ENCODE measurements at regions of chr3 and their contacts with region 1.

Region 1: DNA sequence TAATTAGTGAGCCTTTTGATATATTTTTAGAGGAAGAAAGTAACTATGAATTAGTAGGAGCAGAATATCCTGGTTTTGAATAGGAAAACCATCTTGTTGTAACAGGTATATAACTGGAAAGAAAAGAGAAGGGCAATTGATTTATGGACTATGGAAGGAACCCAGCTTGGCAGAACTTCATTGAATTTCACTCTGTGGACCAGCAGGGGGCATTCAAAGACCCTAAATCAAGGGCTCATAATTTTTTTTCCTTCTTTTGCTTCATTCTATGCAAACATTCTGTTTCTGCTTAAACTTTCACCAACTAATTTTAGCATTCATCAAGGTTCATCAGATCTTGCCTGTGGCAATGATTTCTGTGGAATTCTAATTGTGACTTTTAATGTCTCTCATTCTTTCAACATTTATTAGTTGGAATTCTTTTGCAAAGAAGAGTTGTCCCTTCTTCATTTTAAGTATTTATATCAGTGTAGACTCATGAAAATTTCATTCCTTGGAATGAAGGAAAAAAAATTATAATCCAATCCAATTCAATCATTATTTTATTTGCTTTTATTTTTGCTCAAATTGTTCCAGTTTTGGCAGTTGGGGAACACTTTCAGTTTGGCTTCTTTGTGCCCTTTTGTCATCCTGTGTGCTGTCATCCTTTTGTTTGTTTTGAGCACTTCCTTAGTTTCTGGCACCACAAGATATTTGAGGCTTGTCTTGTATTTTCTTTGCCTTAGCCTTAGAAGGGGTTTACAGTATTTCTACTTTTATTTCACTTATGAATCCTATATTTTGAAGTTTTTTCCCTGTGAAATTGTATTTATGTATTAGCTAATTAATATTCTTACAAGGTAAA is 30.4 kb downstream of the NXPE3 start:
- DNase-seq: peak in 1 of 2 experiments; percentile 42
- H3K4me3 ChIP-seq: no peak overlapping the region
- H3K4me3 Mint-ChIP-seq: no peak overlapping the region
- H3K27ac Mint-ChIP-seq: no peak overlapping the region
- H3K4me1 ChIP-seq: peaks cover 11% of the 10 kb centered on the region; the same call in 1 of the 2 replicates
- H3K4me1 Mint-ChIP-seq: no peaks in the 10 kb centered on the region
- H3K27me3 ChIP-seq: no peaks in the 10 kb centered on the region
- H3K27me3 Mint-ChIP-seq: no peaks in the 10 kb centered on the region
- CTCF ChIP-seq: peak; percentile 62 to 64

Region 2: DNA sequence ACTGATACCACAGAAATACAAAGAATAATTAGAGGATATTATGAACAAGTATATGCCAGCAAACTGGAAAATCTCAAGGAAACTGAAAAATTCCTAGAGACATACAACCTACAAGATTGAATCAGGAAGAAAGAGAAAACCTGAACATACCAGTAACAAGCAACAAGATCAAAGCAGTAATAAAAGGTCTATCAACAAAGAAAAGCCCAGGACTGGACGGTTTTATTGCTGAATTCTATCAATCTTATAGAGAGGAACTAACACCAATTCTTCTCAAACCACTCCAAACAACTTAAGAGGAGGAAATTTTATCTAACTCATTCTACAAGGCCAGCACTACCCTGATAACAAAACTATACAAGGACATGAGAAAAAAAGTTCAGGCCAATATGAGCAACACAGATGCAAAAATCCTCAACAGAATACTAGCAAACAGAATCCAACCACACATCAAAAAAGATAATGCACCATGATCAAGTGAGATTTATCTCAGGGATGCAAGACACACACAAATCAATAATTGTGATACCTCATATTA is 417.9 kb before region 1 on chr3:
- CTCF ChIA-PET with region 1: no interaction called
- POLR2A ChIA-PET with region 1: no interaction called
- intact Hi-C with region 1: no loop called
- DNase-seq: no peak
- H3K4me3 ChIP-seq: no peak overlapping the region
- H3K4me3 Mint-ChIP-seq: no peak overlapping the region
- H3K27ac Mint-ChIP-seq: no peak overlapping the region
- H3K4me1 ChIP-seq: no peaks in the 10 kb centered on the region
- H3K4me1 Mint-ChIP-seq: no peaks in the 10 kb centered on the region
- H3K27me3 ChIP-seq: no peaks in the 10 kb centered on the region
- H3K27me3 Mint-ChIP-seq: no peaks in the 10 kb centered on the region
- CTCF ChIP-seq: no peak

Region 3: DNA sequence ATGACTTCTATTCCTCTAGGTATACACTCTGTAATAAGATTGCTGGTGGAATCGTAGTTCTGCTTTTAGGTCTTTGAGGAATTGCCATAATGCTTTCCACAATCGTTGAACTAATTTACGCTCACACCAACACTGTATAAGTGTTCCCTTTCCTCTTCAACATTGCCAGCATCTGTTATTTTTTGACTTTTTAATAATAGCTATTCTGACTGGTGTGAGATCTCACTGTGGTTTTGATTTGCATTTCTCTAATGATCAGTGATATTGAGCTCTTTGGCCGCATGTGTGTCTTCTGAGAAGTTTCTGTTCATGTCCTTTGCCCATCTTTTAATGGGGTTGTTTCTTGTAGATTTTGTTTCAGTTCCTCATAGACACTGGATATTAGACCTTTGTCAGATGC is 17.6 kb before region 1 on chr3:
- CTCF ChIA-PET with region 1: no interaction called
- POLR2A ChIA-PET with region 1: no interaction called
- intact Hi-C with region 1: no loop called
- DNase-seq: no peak
- H3K4me3 ChIP-seq: no peak overlapping the region
- H3K4me3 Mint-ChIP-seq: no peak overlapping the region
- H3K27ac Mint-ChIP-seq: no peak overlapping the region
- H3K4me1 ChIP-seq: no peaks in the 10 kb centered on the region
- H3K4me1 Mint-ChIP-seq: no peaks in the 10 kb centered on the region
- H3K27me3 ChIP-seq: no peaks in the 10 kb centered on the region
- H3K27me3 Mint-ChIP-seq: no peaks in the 10 kb centered on the region
- CTCF ChIP-seq: no peak

Region 4: DNA sequence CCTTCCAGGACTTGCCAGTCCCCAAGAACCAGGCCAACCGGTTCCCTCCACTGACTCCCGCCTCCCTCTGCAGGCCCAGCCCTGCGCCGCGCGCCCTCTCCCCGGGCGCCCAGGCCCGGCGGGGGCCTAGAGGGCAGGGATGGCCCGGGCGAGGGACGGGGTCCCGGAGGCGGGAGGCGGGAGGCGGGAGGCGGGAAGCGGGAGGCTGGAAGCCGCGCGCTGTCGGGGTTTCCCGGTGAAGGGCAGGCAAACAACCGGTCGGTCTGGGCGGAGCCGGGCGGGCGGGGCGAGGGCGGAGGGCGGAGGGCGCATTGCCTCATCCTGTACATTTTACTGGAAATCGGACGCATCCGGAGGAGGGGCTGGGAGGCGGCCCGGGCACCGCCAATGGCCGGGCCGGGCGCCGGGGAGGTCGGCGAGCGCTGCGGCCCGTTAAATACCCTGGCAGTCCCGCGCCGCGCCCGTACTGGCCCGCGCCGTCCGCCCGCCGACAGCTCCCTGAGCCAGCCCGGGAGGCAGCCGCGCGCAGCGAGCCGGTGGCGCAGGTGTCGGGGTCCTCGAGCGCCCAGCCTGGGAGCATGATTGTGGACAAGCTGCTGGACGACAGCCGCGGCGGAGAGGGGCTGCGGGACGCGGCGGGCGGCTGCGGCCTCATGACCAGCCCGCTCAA is 39.8 kb after region 1 on chr3 and contains the start of gene NFKBIZ:
- CTCF ChIA-PET with region 1: no interaction called
- POLR2A ChIA-PET with region 1: no interaction called
- intact Hi-C with region 1: loop called (anchors 1 kb)
- DNase-seq: peak; percentile 95 to 96
- H3K4me3 ChIP-seq: peak within 1 kb of the TSS; percentile 96
- H3K4me3 Mint-ChIP-seq: peak within 1 kb of the TSS; percentile 65
- H3K27ac Mint-ChIP-seq: peak within 1 kb of the TSS; percentile 61
- H3K4me1 ChIP-seq: peaks cover 54% of the 10 kb centered on the region
- H3K4me1 Mint-ChIP-seq: peaks cover 34% of the 10 kb centered on the region
- H3K27me3 ChIP-seq: no peaks in the 10 kb centered on the region
- H3K27me3 Mint-ChIP-seq: no peaks in the 10 kb centered on the region
- CTCF ChIP-seq: no peak
- total RNA-seq, gene NFKBIZ: 20.2 and 24.5 TPM in 2 replicates

Region 5: DNA sequence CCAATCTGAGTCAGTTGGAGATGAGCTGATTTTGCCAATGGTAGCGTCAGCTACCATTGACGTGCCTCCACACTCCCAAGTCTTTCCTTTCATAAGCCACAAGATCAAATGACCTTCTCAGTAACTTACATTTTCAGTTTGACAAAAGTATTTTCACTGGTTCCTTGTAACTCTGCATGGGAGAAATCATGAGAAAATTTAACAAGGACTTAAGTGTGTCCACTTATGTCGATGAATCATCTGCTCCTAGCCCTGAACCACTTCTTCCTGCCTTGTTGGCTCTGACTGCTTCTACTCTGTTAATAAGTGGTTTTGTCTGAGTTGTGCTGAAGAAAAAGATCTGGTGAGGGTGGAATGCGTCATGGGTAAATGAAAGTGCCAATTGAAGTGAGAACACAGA is 141.1 kb after region 1 on chr3:
- CTCF ChIA-PET with region 1: no interaction called
- POLR2A ChIA-PET with region 1: no interaction called
- intact Hi-C with region 1: loop called (anchors 10 kb)
- DNase-seq: no peak
- H3K4me3 ChIP-seq: no peak overlapping the region
- H3K4me3 Mint-ChIP-seq: no peak overlapping the region
- H3K27ac Mint-ChIP-seq: no peak overlapping the region
- H3K4me1 ChIP-seq: no peaks in the 10 kb centered on the region
- H3K4me1 Mint-ChIP-seq: no peaks in the 10 kb centered on the region
- H3K27me3 ChIP-seq: no peaks in the 10 kb centered on the region
- H3K27me3 Mint-ChIP-seq: no peaks in the 10 kb centered on the region
- CTCF ChIP-seq: no peak

Region 6: GRCh38 chr3:101995371-101996046 is 186.1 kb after region 1 on chr3:
- CTCF ChIA-PET with region 1: no interaction called
- POLR2A ChIA-PET with region 1: no interaction called
- intact Hi-C with region 1: loop called (anchors 10 kb)
- DNase-seq: no peak
- H3K4me3 ChIP-seq: no peak overlapping the region
- H3K4me3 Mint-ChIP-seq: no peak overlapping the region
- H3K27ac Mint-ChIP-seq: no peak overlapping the region
- H3K4me1 ChIP-seq: no peaks in the 10 kb centered on the region
- H3K4me1 Mint-ChIP-seq: no peaks in the 10 kb centered on the region
- H3K27me3 ChIP-seq: no peaks in the 10 kb centered on the region
- H3K27me3 Mint-ChIP-seq: peaks cover 4% of the 10 kb centered on the region
- CTCF ChIP-seq: no peak

Region 7: DNA sequence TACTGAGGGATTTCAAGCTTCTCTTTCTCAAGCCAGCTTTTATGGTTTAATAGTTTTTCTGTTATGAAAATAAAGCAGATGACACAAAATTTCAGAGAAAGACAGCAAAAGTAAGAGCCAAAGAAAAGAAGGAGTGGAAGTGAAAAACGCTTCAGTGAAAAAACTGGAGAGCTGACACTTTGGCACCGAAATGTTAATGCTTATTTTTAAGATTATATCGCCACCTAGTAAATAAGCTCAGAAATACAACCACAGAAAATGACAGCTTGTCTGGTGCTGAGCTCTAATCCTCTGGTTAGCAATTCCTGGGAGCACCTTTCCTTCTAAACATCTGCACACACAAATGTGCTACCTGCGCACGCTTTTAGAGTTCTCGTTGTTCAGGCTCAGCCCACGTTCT is 727.1 kb after region 1 on chr3:
- CTCF ChIA-PET with region 1: no interaction called
- POLR2A ChIA-PET with region 1: no interaction called
- intact Hi-C with region 1: loop called (anchors 2 kb)
- DNase-seq: peak in 1 of 2 experiments; percentile 17
- H3K4me3 ChIP-seq: no peak overlapping the region
- H3K4me3 Mint-ChIP-seq: no peak overlapping the region
- H3K27ac Mint-ChIP-seq: no peak overlapping the region
- H3K4me1 ChIP-seq: no peaks in the 10 kb centered on the region
- H3K4me1 Mint-ChIP-seq: no peaks in the 10 kb centered on the region
- H3K27me3 ChIP-seq: no peaks in the 10 kb centered on the region
- H3K27me3 Mint-ChIP-seq: peaks cover 3% of the 10 kb centered on the region
- CTCF ChIP-seq: peak; percentile 21 to 35

Measured in Caco-2 (cell line).